Endothelial cell of umbilical vein (primary cell): ENCODE measurements at regions of chr10 and their contacts with region 1.

Region 1: GRCh38 chr10:114714281-114714741 is 56.2 kb upstream of the ABLIM1 start:
- DNase-seq: peak; percentile 93
- H3K4me3 ChIP-seq: no peak overlapping the region
- H3K27ac ChIP-seq: peak overlapping the region; percentile 58
- H3K4me1 ChIP-seq: peaks cover 37% of the 10 kb centered on the region
- H3K27me3 ChIP-seq: no peaks in the 10 kb centered on the region
- CTCF ChIP-seq: no peak
- POLR2A ChIP-seq: no peak

Region 2: DNA sequence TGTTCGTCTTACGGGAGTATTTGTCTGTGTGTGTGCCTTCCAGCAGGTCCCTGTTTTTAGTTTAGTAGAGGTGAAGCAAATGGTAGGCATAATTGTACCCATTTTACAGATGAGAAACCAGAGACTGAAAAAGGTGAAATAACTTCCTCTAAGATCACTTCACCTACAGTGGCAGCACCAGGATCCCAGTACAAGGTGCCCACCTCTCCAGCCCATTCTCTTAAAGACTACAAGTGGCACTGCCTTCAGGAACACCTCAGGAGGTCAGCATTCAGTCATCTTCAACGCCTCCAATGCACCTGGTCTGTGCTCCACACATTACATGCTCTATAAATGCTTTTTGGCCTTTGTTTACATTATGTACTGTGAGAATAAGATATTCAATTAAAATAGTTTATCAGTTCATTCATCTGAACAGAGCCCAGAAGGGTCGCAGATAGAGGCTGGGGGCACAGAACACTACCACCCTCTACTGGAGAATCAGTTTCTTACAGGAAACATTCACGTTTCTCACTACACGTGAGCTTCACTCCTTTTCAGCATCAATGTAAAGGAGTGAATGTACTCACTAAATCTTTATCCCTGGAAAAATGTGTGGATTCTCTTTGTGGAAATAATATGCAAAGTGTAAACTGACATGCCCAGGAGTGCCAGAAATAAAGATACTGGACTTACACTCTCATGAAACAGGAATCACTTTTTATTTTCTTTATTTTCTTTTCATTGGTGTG is 10.8 kb before region 1 on chr10:
- CTCF ChIA-PET with region 1: interaction called, 33 read pairs
- POLR2A ChIA-PET with region 1: no interaction called
- dilution Hi-C with region 1: no loop called
- intact Hi-C with region 1: no loop called
- DNase-seq: peak; percentile 69
- H3K4me3 ChIP-seq: no peak overlapping the region
- H3K27ac ChIP-seq: no peak overlapping the region
- H3K4me1 ChIP-seq: peaks cover under 1% of the 10 kb centered on the region
- H3K27me3 ChIP-seq: no peaks in the 10 kb centered on the region
- CTCF ChIP-seq: peak; percentile 63 to 67
- POLR2A ChIP-seq: no peak

Region 3: DNA sequence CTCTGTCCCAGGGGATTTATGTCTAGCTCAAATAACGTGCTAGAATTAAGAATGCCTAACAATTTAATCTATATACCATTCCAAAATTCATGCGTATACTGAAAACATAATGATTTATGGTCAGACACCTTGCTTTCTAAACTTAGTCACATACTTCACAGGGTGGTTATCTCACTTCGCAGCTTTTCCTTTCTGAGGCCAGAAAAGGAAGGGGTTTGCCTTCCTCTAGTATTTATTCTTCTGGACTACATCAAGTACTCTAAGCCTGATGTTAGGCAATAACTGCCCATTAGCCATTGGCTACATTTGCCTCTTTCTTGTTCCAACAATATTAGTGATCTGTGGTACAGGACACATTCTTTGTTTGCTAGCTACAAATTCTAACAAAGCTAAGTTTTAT is 34.7 kb after region 1 on chr10:
- CTCF ChIA-PET with region 1: interaction called, 6 read pairs
- POLR2A ChIA-PET with region 1: no interaction called
- dilution Hi-C with region 1: no loop called
- intact Hi-C with region 1: loop called (anchors 1 kb)
- DNase-seq: peak; percentile 98
- H3K4me3 ChIP-seq: no peak overlapping the region
- H3K27ac ChIP-seq: no peak overlapping the region
- H3K4me1 ChIP-seq: peaks cover 5% of the 10 kb centered on the region
- H3K27me3 ChIP-seq: no peaks in the 10 kb centered on the region
- CTCF ChIP-seq: no peak
- POLR2A ChIP-seq: no peak

Region 4: GRCh38 chr10:114767101-114767985 is 53.0 kb after region 1 on chr10:
- CTCF ChIA-PET with region 1: interaction called, 3 read pairs
- POLR2A ChIA-PET with region 1: no interaction called
- dilution Hi-C with region 1: no loop called
- intact Hi-C with region 1: loop called (anchors 1 kb)
- DNase-seq: peak; percentile 65
- H3K4me3 ChIP-seq: peak overlapping the region; percentile 59 to 68 (median 62)
- H3K27ac ChIP-seq: no peak overlapping the region
- H3K4me1 ChIP-seq: peaks cover 15% of the 10 kb centered on the region
- H3K27me3 ChIP-seq: peaks cover 0 to 4% of the 10 kb centered on the region in 2 experiments
- CTCF ChIP-seq: no peak
- POLR2A ChIP-seq: no peak